Activated CD4-positive, alpha-beta memory T cell treated with anti-CD3 and anti-CD28 coated beads, Interleukin-2, amount 10 ng/mL, durations not matched to agents 7 days and 5 days (primary cell): ENCODE measurements at regions of chr4 and their contacts with region 1.

Region 1: GRCh38 chr4:98446499-98447375 is 185.6 kb downstream of the RAP1GDS1 start:
- DNase-seq: peak; percentile 79
- H3K4me3 Mint-ChIP-seq: peak overlapping the region; percentile 40
- H3K27ac Mint-ChIP-seq: peak overlapping the region; percentile 91
- H3K4me1 Mint-ChIP-seq: peaks cover 43% of the 10 kb centered on the region
- H3K27me3 Mint-ChIP-seq: no peaks in the 10 kb centered on the region

Region 2: GRCh38 chr4:98092833-98093439 is 353.8 kb before region 1 on chr4:
- CTCF ChIA-PET with region 1: no interaction called
- POLR2A ChIA-PET with region 1: no interaction called
- DNase-seq: no peak
- H3K4me3 Mint-ChIP-seq: no peak overlapping the region
- H3K27ac Mint-ChIP-seq: no peak overlapping the region
- H3K4me1 Mint-ChIP-seq: no peaks in the 10 kb centered on the region
- H3K27me3 Mint-ChIP-seq: peaks cover 10% of the 10 kb centered on the region

Region 3: GRCh38 chr4:98421111-98421510 is 25.6 kb before region 1 on chr4:
- CTCF ChIA-PET with region 1: no interaction called
- POLR2A ChIA-PET with region 1: no interaction called
- DNase-seq: no peak
- H3K4me3 Mint-ChIP-seq: no peak overlapping the region
- H3K27ac Mint-ChIP-seq: no peak overlapping the region
- H3K4me1 Mint-ChIP-seq: peaks cover 7% of the 10 kb centered on the region
- H3K27me3 Mint-ChIP-seq: no peaks in the 10 kb centered on the region

Region 4: DNA sequence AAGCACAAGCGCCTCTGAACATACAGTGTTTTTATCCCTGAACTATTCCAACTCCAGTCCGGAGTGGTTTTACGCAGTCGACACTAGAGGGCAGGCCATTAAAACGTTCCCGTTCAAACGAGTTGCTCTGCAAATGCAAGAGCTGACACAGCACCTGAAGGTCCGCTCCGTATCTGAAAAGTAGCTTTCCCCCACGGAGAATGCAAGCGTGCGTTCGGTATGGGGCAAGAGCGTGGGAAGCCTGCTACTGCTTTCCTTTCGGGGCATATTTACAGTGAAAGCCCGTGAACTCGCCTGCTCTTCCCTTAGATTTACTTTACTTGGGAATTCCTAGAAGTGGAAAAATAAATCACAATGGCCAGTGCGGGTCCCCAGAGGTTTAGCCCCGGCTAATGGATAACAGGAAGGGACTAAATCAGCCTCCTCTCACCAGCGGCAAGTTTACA is 20.9 kb after region 1 on chr4:
- CTCF ChIA-PET with region 1: interaction called, 11 read pairs
- POLR2A ChIA-PET with region 1: no interaction called
- DNase-seq: peak; percentile 74
- H3K4me3 Mint-ChIP-seq: peak overlapping the region; percentile 49
- H3K27ac Mint-ChIP-seq: no peak overlapping the region
- H3K4me1 Mint-ChIP-seq: peaks cover 28% of the 10 kb centered on the region
- H3K27me3 Mint-ChIP-seq: no peaks in the 10 kb centered on the region

Region 5: GRCh38 chr4:98573791-98574190 is 127.1 kb after region 1 on chr4:
- CTCF ChIA-PET with region 1: no interaction called
- POLR2A ChIA-PET with region 1: no interaction called
- DNase-seq: no peak
- H3K4me3 Mint-ChIP-seq: no peak overlapping the region
- H3K27ac Mint-ChIP-seq: no peak overlapping the region
- H3K4me1 Mint-ChIP-seq: peaks cover 13% of the 10 kb centered on the region
- H3K27me3 Mint-ChIP-seq: no peaks in the 10 kb centered on the region